Panc1 (cell line): ENCODE measurements at regions of chr12 and their contacts with region 1.

Region 1: GRCh38 chr12:14257734-14258574 is 107.5 kb upstream of the ATF7IP start:
- DNase-seq: peak; percentile 56
- ATAC-seq: peak; percentile 82
- H3K4me3 ChIP-seq: peak overlapping the region in 1 of 2 experiments; percentile 15; a peak in 2 of 4 replicates
- H3K27ac ChIP-seq: peak overlapping the region; percentile 86
- H3K4me1 ChIP-seq: peaks cover 17% of the 10 kb centered on the region
- H3K27me3 ChIP-seq: no peaks in the 10 kb centered on the region
- CTCF ChIP-seq: no peak

Region 2: GRCh38 chr12:14365294-14366208 is 107.6 kb after region 1 on chr12 and contains the start of gene ATF7IP:
- CTCF ChIA-PET with region 1: interaction called, 12 read pairs
- POLR2A ChIA-PET with region 1: no interaction called
- in situ Hi-C with region 1: no loop called
- intact Hi-C with region 1: loop called (anchors 10 kb)
- DNase-seq: peak; percentile 75
- ATAC-seq: peak; percentile 95
- H3K4me3 ChIP-seq: peak within 1 kb of the TSS; percentile 58 to 62
- H3K27ac ChIP-seq: peak within 1 kb of the TSS; percentile 89
- H3K4me1 ChIP-seq: peaks cover 3% of the 10 kb centered on the region; the same call in 1 of the 2 replicates
- H3K27me3 ChIP-seq: no peaks in the 10 kb centered on the region
- CTCF ChIP-seq: peak; percentile 48; the same call in 1 of the 2 replicates
- total RNA-seq, gene ATF7IP: 25.4 TPM

Region 3: DNA sequence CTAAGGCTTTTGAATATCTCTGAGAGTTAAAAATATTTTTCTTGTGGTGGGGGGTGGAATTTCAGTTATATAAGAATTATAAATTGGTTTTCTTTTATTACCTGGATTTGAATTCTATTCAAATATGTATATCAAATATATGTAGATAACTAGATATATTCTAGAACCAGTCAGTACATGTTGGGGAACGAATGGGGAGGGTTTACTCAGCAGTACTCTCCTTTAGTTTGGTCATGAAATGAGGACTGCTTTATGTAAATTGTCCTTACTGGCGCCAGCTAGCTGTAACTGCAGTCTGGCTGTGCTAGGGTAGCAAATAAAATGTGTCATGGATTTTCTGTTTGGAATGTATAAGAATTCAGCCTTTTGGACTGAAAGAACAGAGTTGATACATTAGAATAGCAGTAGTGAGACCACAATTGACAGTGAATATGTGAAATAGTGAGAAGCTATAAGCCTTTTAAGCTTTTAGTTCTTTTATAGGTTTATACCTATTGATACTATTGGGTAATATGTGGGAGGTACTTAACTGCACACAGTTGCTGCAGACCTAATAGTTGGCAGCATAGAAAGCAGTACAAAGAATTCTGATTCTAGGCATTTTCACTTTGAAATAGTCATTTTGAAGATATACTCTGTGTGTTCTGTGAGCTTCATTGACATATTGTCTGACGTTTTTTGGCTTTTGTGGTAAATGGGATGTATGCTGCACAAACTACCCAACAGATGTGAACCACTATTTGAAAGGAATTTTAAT is 136.5 kb after region 1 on chr12:
- CTCF ChIA-PET with region 1: no interaction called
- POLR2A ChIA-PET with region 1: no interaction called
- in situ Hi-C with region 1: no loop called
- intact Hi-C with region 1: loop called (anchors 10 kb)
- DNase-seq: peak; percentile 47
- ATAC-seq: peak; percentile 96
- H3K4me3 ChIP-seq: no peak overlapping the region; a peak in 1 of 4 replicates
- H3K27ac ChIP-seq: peak overlapping the region; percentile 82
- H3K4me1 ChIP-seq: peaks cover 32% of the 10 kb centered on the region
- H3K27me3 ChIP-seq: no peaks in the 10 kb centered on the region
- CTCF ChIP-seq: no peak